ENCODE measurements at regions of chr4 and their contacts with region 1.

Region 1: GRCh38 chr4:159483782-159484767 is 381.2 kb downstream of the RAPGEF2 start:
- DNase-seq: no peak

Region 2: GRCh38 chr4:159374749-159375530 is 109.1 kb before region 1 on chr4:
- intact Hi-C with region 1: no loop called
- DNase-seq: no peak

Region 3: GRCh38 chr4:159401791-159402380 is 82.2 kb before region 1 on chr4:
- intact Hi-C with region 1: loop called in 1 of 2 experiments (anchors 2 kb)
- DNase-seq: no peak

Measured in posterior vena cava (tissue), 2 donors.